ENCODE measurements at regions of chr19 and their contacts with region 1.

Region 1: DNA sequence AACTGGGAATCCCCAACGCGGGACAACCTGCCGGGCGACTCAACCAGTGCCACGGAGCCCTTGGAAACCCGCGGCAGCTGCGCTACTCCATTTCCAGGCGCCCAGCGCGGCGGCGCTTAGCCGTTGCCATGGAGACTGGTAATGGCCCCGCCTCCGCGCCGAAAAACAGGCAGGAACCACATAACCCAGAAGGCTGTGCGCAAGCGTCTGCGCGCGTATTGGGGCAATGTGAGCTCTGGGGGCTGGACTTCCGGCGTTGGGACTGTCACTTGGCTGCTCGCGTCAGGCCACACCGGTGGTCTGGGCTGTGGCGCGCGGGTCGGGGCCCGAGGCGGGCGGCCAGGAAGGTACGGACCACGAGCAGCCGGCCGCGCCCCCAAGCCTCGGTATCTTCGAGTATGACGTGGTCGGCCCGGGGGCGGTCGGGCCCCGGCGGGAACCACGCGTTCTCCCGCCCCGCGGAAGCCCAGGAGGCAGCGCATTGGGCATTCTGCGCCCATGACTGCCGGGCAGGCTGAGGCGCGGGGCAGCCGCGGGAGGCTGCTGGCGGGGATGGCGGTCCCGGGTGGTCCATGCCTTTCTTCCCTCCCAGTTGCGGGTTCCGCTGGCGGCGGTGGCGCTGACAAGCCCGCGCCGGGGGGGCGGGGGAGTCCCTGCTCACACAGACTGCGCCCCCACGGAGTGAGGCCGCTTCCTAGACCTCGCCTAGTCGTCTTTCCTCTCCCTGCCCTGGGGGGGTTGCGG is at the start of gene ZNF324B:
- DNase-seq: peak; percentile 96 to 97 (median 96)
- H3K4me3 ChIP-seq: peak within 1 kb of the TSS; percentile 60 to 69
- H3K4me3 Mint-ChIP-seq: peak within 1 kb of the TSS; percentile 85 to 93 (median 88)
- H3K27ac ChIP-seq: peak within 1 kb of the TSS; percentile 67
- H3K27ac Mint-ChIP-seq: peak within 1 kb of the TSS; percentile 67 to 93 (median 84)
- H3K4me1 ChIP-seq: peaks cover 7% of the 10 kb centered on the region
- H3K4me1 Mint-ChIP-seq: peaks cover 13 to 31% (median 19%) of the 10 kb centered on the region in 4 donors
- H3K27me3 ChIP-seq: no peaks in the 10 kb centered on the region
- H3K27me3 Mint-ChIP-seq: peaks cover 6 to 11% of the 10 kb centered on the region in 2 donors
- total RNA-seq, gene ZNF324B: 13.1 to 13.7 TPM

Region 2: GRCh38 chr19:57964748-57965147 is 486.8 kb before region 1 on chr19:
- CTCF ChIA-PET with region 1: no interaction called
- POLR2A ChIA-PET with region 1: no interaction called
- intact Hi-C with region 1: no loop called
- DNase-seq: no peak
- H3K4me3 ChIP-seq: no peak overlapping the region
- H3K4me3 Mint-ChIP-seq: no peak overlapping the region
- H3K27ac ChIP-seq: no peak overlapping the region
- H3K27ac Mint-ChIP-seq: no peak overlapping the region
- H3K4me1 ChIP-seq: no peaks in the 10 kb centered on the region
- H3K4me1 Mint-ChIP-seq: no peaks in the 10 kb centered on the region
- H3K27me3 ChIP-seq: no peaks in the 10 kb centered on the region
- H3K27me3 Mint-ChIP-seq: no peaks in the 10 kb centered on the region

Region 3: GRCh38 chr19:58408152-58409009 is 43.1 kb before region 1 on chr19 and contains the start of gene ZNF584:
- CTCF ChIA-PET with region 1: interaction called, 3 read pairs
- POLR2A ChIA-PET with region 1: interaction called, 5 read pairs
- intact Hi-C with region 1: loop called (anchors 1 kb)
- DNase-seq: peak; percentile 93 to 94 (median 93)
- H3K4me3 ChIP-seq: peak within 1 kb of the TSS; percentile 71 to 94
- H3K4me3 Mint-ChIP-seq: peak within 1 kb of the TSS; percentile 92 to 100 (median 96)
- H3K27ac ChIP-seq: peak within 1 kb of the TSS; percentile 77
- H3K27ac Mint-ChIP-seq: peak within 1 kb of the TSS; percentile 91 to 98 (median 95)
- H3K4me1 ChIP-seq: peaks cover 25% of the 10 kb centered on the region
- H3K4me1 Mint-ChIP-seq: peaks cover 21 to 39% (median 33%) of the 10 kb centered on the region in 4 donors
- H3K27me3 ChIP-seq: no peaks in the 10 kb centered on the region
- H3K27me3 Mint-ChIP-seq: no peaks in the 10 kb centered on the region
- total RNA-seq, gene ZNF584: 10.3 to 10.7 TPM

Region 4: GRCh38 chr19:58492265-58492664 is 40.7 kb after region 1 on chr19:
- CTCF ChIA-PET with region 1: no interaction called
- POLR2A ChIA-PET with region 1: no interaction called
- intact Hi-C with region 1: no loop called
- DNase-seq: no peak
- H3K4me3 ChIP-seq: no peak overlapping the region
- H3K4me3 Mint-ChIP-seq: no peak overlapping the region
- H3K27ac ChIP-seq: no peak overlapping the region
- H3K27ac Mint-ChIP-seq: no peak overlapping the region
- H3K4me1 ChIP-seq: peaks cover 7% of the 10 kb centered on the region
- H3K4me1 Mint-ChIP-seq: peaks cover 0 to 3% (median 0%) of the 10 kb centered on the region in 4 donors
- H3K27me3 ChIP-seq: no peaks in the 10 kb centered on the region
- H3K27me3 Mint-ChIP-seq: no peaks in the 10 kb centered on the region

Measured in CD4-positive, alpha-beta memory T cell (primary cell).